Esophagus muscularis mucosa (tissue), 4 donors: ENCODE measurements at regions of chr2 and their contacts with region 1.

Region 1: DNA sequence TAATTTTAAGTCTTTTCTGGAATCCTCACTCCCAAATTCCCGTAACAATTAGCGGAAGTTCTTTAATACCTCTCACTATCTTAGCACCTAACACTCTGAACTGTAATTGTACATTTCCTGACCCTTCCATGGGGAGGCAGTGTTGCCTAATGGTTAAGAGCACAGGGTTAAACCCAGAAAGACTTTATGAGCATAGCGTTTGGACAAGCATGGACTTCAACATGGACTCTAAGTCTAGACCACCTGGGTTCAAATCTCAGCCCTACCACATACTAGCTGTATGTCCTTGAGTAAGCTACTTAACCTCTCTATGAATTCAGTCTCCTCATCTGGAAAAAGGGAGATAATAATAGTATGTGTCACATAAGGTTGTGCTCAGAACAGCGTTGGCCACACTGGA is 13.0 kb downstream of the ANTXR1 start:
- DNase-seq: peak; percentile 87
- H3K4me3 ChIP-seq: no peak overlapping the region
- H3K27ac ChIP-seq: peak overlapping the region in 2 of 4 donors; percentile 19 to 28
- H3K4me1 ChIP-seq: peaks cover 3 to 57% (median 43%) of the 10 kb centered on the region in 4 donors
- H3K27me3 ChIP-seq: no peaks in the 10 kb centered on the region
- CTCF ChIP-seq: peak; percentile 48 to 60 (median 57)
- EP300 ChIP-seq: no peak
- POLR2A ChIP-seq: no peak

Region 2: DNA sequence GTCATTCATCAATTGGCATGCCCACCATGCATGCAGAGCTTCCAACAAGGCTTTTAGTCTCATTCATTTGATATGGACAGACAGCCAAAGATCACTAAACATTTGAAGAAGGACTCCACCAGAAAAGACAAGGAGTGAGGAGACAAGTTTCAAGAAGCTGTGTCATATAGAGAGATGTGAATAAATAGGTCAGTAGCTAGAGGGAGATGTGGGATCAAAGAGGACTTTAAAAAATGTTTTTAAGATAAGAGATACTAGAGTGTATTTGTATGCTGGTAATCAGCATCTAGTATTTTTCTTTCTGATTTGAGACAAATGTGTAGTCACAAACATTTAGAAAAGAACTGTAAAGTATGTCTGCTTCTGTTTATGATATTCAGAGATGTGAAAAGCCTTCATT is 35.5 kb after region 1 on chr2:
- intact Hi-C with region 1: no loop called
- DNase-seq: no peak
- H3K4me3 ChIP-seq: no peak overlapping the region
- H3K27ac ChIP-seq: peak overlapping the region in 1 of 4 donors; percentile 46
- H3K4me1 ChIP-seq: peaks cover 34 to 57% (median 52%) of the 10 kb centered on the region in 4 donors
- H3K27me3 ChIP-seq: no peaks in the 10 kb centered on the region
- CTCF ChIP-seq: no peak
- EP300 ChIP-seq: no peak
- POLR2A ChIP-seq: no peak

Region 3: GRCh38 chr2:69118609-69119008 is 92.6 kb after region 1 on chr2:
- intact Hi-C with region 1: loop called (anchors 5 kb)
- DNase-seq: no peak
- H3K4me3 ChIP-seq: no peak overlapping the region
- H3K27ac ChIP-seq: peak overlapping the region; percentile 74 to 84 (median 80)
- H3K4me1 ChIP-seq: peaks cover 10 to 62% (median 52%) of the 10 kb centered on the region in 4 donors
- H3K27me3 ChIP-seq: no peaks in the 10 kb centered on the region
- CTCF ChIP-seq: no peak
- EP300 ChIP-seq: no peak
- POLR2A ChIP-seq: no peak